ENCODE measurements at regions of chr12 and their contacts with region 1.

Region 1: GRCh38 chr12:10771132-10771733 is 31.2 kb downstream of the TAS2R7 start:
- DNase-seq: peak; percentile 59
- H3K4me3 ChIP-seq: no peak overlapping the region
- H3K27ac ChIP-seq: no peak overlapping the region
- H3K4me1 ChIP-seq: no peaks in the 10 kb centered on the region
- H3K27me3 ChIP-seq: peaks cover 29% of the 10 kb centered on the region
- CTCF ChIP-seq: peak; percentile 76

Region 2: DNA sequence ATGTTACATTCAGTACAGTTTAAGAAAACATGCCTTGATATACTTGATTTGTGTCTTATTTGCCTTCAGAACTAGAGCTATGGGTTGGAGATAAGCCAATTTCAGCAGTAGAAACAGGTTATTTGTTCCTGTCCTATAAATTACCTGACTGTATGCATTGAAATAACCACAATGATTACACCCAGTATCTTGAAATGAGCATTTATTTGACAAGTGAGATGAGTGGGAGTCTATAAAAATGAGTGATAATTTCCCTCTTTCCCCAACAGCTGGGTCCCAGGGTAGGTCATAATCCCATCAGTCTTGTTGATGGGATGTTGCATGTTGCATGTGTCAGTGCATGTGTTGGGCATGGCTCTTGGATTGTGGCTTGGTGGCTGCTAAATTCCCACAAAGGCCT is 411.8 kb after region 1 on chr12:
- CTCF ChIA-PET with region 1: no interaction called
- POLR2A ChIA-PET with region 1: no interaction called
- intact Hi-C with region 1: no loop called
- DNase-seq: no peak
- H3K4me3 ChIP-seq: no peak overlapping the region
- H3K27ac ChIP-seq: no peak overlapping the region
- H3K4me1 ChIP-seq: no peaks in the 10 kb centered on the region
- H3K27me3 ChIP-seq: no peaks in the 10 kb centered on the region
- CTCF ChIP-seq: no peak

Region 3: GRCh38 chr12:11202811-11203210 is 431.6 kb after region 1 on chr12:
- CTCF ChIA-PET with region 1: interaction called, 13 read pairs
- POLR2A ChIA-PET with region 1: no interaction called
- intact Hi-C with region 1: loop called (anchors 1 kb)
- DNase-seq: peak; percentile 16
- H3K4me3 ChIP-seq: no peak overlapping the region
- H3K27ac ChIP-seq: peak overlapping the region; percentile 33
- H3K4me1 ChIP-seq: peaks cover 19% of the 10 kb centered on the region
- H3K27me3 ChIP-seq: no peaks in the 10 kb centered on the region
- CTCF ChIP-seq: no peak

Region 4: GRCh38 chr12:11508699-11509098 is 737.5 kb after region 1 on chr12:
- CTCF ChIA-PET with region 1: no interaction called
- POLR2A ChIA-PET with region 1: no interaction called
- intact Hi-C with region 1: loop called (anchors 5 kb)
- DNase-seq: no peak
- H3K4me3 ChIP-seq: no peak overlapping the region
- H3K27ac ChIP-seq: no peak overlapping the region
- H3K4me1 ChIP-seq: no peaks in the 10 kb centered on the region
- H3K27me3 ChIP-seq: peaks cover 9% of the 10 kb centered on the region
- CTCF ChIP-seq: no peak